ENCODE measurements at regions of chr2 and their contacts with region 1.

Region 1: DNA sequence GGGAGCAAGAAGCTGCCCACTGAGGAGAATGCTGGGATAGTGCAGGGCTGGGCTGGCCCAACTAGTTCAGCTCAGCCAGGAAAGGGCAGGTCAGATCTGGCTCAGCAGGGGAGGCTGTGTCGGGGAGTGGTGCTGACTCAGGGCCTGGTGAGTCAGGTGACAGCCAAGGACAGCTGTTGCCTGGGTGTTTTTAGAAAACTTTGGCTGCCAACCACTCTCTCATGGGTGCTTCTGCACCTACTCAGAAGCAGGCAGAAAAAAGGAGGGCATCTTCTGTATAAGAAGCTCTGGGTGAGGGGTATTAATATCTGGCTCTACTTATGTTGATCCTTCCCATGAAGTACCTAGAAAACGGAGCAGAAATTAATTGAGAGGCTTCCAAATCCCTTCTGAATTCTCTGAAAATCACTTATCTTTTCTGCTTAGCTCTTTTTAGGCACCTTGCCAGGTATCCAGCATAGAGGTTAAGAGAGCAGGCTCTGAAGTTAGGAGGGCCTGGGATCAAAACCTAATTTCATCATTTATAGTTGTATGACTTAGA is 15.6 kb upstream of the RAB10 start:
- DNase-seq: no peak
- ATAC-seq: peak in 2 of 4 experiments; percentile 68
- H3K4me3 ChIP-seq: no peak overlapping the region
- H3K4me3 Mint-ChIP-seq: no peak overlapping the region
- H3K27ac ChIP-seq: no peak overlapping the region
- H3K27ac Mint-ChIP-seq: no peak overlapping the region
- H3K4me1 ChIP-seq: no peaks in the 10 kb centered on the region
- H3K4me1 Mint-ChIP-seq: peaks cover 0 to 3% (median 0%) of the 10 kb centered on the region in 3 donors
- H3K27me3 ChIP-seq: peaks cover 0 to 3% of the 10 kb centered on the region in 2 experiments
- H3K27me3 Mint-ChIP-seq: no peaks in the 10 kb centered on the region

Region 2: DNA sequence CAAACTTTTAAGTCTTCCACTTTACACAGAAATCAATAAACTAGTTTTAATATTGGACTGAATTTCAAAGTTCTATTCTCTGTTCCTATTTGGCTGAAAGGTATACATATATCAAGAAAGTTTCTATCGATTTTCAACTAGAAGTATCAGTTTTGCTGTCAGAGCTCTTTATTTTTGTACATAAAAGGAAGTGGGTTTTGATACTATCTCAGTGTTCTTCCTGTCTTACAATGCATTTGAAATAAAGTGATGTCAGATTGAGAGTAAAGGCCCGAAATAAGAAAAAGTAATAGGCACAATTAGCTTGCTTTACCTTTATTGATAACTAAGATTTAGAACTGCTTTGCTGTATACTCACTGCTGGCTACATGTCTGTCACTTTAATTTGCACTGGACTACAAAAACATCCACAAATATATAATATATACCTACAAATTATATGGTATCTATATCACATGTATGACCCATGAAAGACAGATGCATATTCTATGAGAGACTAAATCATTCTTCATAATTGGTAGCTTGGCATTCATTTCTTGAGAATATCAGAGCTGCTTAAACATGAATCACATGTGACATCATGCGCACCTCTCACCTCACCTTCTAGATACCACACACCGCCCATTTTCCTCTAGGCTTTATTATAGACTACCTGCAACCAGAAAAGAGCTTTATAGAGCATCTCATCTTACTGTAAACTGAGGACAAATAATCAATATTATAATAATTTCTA is 223.5 kb before region 1 on chr2:
- CTCF ChIA-PET with region 1: no interaction called
- POLR2A ChIA-PET with region 1: no interaction called
- DNase-seq: peak in 2 of 35 experiments; percentile 5 to 60
- ATAC-seq: peak; percentile 84 to 93 (median 90)
- H3K4me3 ChIP-seq: peak overlapping the region in 1 of 2 donors; percentile 18
- H3K4me3 Mint-ChIP-seq: peak overlapping the region; percentile 74 to 81 (median 79)
- H3K27ac ChIP-seq: peak overlapping the region; percentile 78
- H3K27ac Mint-ChIP-seq: peak overlapping the region; percentile 94 to 98
- H3K4me1 ChIP-seq: peaks cover 33 to 38% of the 10 kb centered on the region in 2 experiments
- H3K4me1 Mint-ChIP-seq: peaks cover 78 to 85% (median 85%) of the 10 kb centered on the region in 3 donors
- H3K27me3 ChIP-seq: no peaks in the 10 kb centered on the region
- H3K27me3 Mint-ChIP-seq: no peaks in the 10 kb centered on the region

Region 3: DNA sequence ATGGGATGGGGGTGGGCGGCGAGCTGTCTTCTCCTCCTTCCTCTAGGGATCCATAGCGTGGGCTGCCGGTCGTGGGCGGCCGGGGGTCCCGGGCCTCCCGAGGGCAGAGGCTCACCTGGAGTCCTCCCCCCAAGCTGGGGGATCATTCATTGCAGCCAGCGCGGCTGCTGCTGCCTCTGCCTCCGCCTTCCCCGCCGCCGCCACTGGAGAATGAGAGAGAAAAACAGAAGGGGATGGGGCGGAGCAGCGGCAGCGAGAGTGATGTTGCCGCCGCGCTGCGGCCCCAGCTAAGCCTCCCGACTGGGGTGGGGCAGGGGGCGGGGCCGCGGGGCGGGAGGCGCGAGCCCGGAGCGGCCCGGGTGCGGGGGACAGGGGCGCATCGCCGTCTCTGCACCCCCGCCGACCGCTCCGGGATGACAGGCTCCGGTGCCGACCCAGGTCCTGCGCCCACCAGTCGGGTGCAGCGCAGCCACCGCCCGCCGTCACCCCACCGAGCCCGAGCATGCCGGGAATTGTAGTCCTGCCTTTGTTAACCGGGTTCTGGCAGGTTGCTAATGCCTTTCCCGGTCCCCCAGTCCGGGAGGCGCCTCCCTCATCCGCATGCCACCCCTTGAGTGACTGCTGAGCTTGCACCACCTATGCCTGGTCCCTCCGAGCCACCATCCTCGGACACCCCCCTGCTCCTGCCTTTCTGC is 35.8 kb before region 1 on chr2 and contains the start of gene KIF3C:
- CTCF ChIA-PET with region 1: interaction called in 1 of 2 experiments, 12 read pairs
- POLR2A ChIA-PET with region 1: no interaction called
- DNase-seq: peak; percentile 59 to 82 (median 70)
- ATAC-seq: peak; percentile 91 to 95 (median 94)
- H3K4me3 ChIP-seq: peak within 1 kb of the TSS; percentile 83 to 84
- H3K4me3 Mint-ChIP-seq: peak within 1 kb of the TSS; percentile 80 to 88 (median 88)
- H3K27ac ChIP-seq: no peak within 1 kb of the TSS
- H3K27ac Mint-ChIP-seq: peak within 1 kb of the TSS; percentile 37 to 75
- H3K4me1 ChIP-seq: peaks cover 2 to 21% of the 10 kb centered on the region in 2 experiments
- H3K4me1 Mint-ChIP-seq: peaks cover 21 to 31% (median 27%) of the 10 kb centered on the region in 3 donors
- H3K27me3 ChIP-seq: peaks cover 0 to 11% of the 10 kb centered on the region in 2 experiments
- H3K27me3 Mint-ChIP-seq: no peaks in the 10 kb centered on the region
- total RNA-seq, gene KIF3C: 3.3 to 8.6 (median 6.9) TPM

Region 4: DNA sequence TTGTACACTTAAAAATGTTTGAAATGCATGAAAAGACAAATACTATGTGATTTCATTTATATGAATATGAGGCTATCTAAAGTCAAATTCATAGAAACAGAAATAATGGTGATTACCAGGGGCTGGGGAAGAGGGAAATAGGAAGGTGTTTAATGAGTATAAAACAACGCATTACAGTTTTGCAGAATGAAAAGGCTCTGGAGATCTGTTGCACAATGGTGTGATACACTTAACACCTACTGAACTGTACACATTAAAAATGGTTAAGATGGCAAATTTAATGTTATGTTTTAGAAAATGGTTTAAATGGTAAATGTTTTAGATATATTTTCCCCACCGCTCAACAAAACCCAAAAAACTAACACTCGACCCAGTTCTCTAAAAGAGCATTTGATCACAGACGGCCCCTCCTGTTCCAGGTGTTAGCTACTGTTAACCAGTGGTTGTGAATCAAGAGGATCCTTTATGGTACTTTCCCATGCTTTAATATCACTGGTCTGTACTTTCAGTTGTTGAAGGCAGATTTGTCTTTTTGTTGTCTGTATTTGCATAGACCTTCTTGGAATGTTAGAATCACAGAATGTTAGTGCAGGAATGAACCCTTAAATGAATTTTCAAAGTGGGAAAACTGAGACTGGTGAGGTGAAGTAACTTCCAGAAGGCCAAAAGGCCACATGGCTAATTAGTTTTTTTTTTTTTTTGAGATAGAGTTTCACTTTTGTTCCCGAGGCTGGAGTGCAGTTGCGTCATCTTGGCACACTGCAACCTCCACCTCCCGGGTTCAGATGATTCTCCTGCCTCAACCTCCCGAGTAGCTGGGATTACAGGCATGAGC is 25.8 kb after region 1 on chr2:
- CTCF ChIA-PET with region 1: no interaction called
- POLR2A ChIA-PET with region 1: no interaction called
- DNase-seq: peak in 2 of 35 experiments; percentile 16 to 45
- ATAC-seq: peak in 1 of 4 experiments; percentile 79
- H3K4me3 ChIP-seq: peak overlapping the region in 1 of 2 donors; percentile 1
- H3K4me3 Mint-ChIP-seq: peak overlapping the region; percentile 3 to 49 (median 19)
- H3K27ac ChIP-seq: peak overlapping the region; percentile 20
- H3K27ac Mint-ChIP-seq: peak overlapping the region; percentile 5 to 38
- H3K4me1 ChIP-seq: peaks cover 6 to 33% of the 10 kb centered on the region in 2 experiments
- H3K4me1 Mint-ChIP-seq: peaks cover 70 to 75% (median 73%) of the 10 kb centered on the region in 3 donors
- H3K27me3 ChIP-seq: no peaks in the 10 kb centered on the region
- H3K27me3 Mint-ChIP-seq: no peaks in the 10 kb centered on the region

Region 5: GRCh38 chr2:26292665-26293064 is 274.4 kb after region 1 on chr2:
- CTCF ChIA-PET with region 1: interaction called in 1 of 2 experiments, 10 read pairs
- POLR2A ChIA-PET with region 1: no interaction called
- DNase-seq: no peak
- ATAC-seq: no peak
- H3K4me3 ChIP-seq: no peak overlapping the region
- H3K4me3 Mint-ChIP-seq: no peak overlapping the region
- H3K27ac ChIP-seq: no peak overlapping the region
- H3K27ac Mint-ChIP-seq: no peak overlapping the region
- H3K4me1 ChIP-seq: no peaks in the 10 kb centered on the region
- H3K4me1 Mint-ChIP-seq: no peaks in the 10 kb centered on the region
- H3K27me3 ChIP-seq: no peaks in the 10 kb centered on the region
- H3K27me3 Mint-ChIP-seq: no peaks in the 10 kb centered on the region